BJ (cell line): ENCODE measurements at regions of chr15 and their contacts with region 1.

Region 1: GRCh38 chr15:99473981-99474906 is 91.5 kb upstream of the MEF2A start:
- DNase-seq: no peak
- H3K4me3 ChIP-seq: no peak overlapping the region
- H3K27me3 ChIP-seq: 0 out of 2 replicates have a peak, but pooled peaks cover 1% of the 10 kb centered on the region
- CTCF ChIP-seq: no peak

Region 2: GRCh38 chr15:99464137-99464536 is 10.1 kb before region 1 on chr15:
- CTCF ChIA-PET with region 1: interaction called, 10 read pairs
- POLR2A ChIA-PET with region 1: no interaction called
- DNase-seq: no peak
- H3K4me3 ChIP-seq: no peak overlapping the region
- H3K27me3 ChIP-seq: no peaks in the 10 kb centered on the region
- CTCF ChIP-seq: no peak